ENCODE measurements at regions of chr1 and their contacts with region 1.

Region 1: DNA sequence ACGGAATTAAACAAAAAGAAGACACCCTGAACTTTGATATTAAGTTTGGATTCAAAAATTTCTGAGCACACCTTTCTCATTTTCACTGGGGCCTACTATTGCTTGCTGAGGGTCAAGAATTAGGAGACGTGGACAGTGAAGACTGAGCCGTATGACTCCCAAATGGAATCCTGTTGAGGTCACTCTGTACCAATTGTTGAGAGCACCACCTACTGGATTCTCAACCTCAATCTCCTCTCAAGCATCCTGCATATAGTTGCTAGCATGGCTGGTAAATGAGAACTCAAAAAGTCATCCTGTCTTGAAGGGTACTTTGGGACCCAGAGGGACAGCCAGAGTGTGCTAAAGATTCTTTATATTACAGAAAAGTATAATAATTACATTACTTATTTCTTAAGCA is 20.2 kb upstream of the MTR start:
- DNase-seq: no peak
- ATAC-seq: no peak
- H3K4me3 ChIP-seq: no peak overlapping the region
- H3K27ac ChIP-seq: no peak overlapping the region
- H3K4me1 ChIP-seq: no peaks in the 10 kb centered on the region
- H3K27me3 ChIP-seq: no peaks in the 10 kb centered on the region

Region 2: DNA sequence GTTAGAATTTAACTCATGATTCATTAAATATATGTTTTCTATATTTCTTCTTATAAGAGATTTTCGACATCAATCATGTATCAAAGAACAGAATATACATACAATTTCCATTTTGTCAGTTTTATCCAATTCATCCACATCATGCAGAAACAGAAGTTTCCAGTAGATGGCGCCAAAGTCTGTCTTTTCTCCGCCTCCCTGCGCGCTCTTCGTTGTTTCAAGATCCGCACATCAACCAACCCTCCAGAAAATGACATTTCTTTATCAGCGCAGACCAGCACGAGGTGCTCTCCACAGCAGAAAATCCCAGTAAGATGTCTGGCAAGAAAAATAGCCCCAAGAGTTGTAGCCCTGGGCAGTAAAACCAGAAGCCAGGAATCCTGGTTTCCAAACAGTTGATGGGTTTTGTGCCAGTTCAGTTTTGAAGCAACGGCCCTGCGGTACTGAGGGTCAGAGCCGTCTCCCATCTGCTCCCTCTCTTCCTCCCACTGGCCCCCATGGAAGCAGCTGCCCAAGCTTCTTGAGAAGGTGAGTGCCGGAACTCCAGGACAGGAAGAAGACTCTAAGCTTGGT is 671.2 kb before region 1 on chr1:
- intact Hi-C with region 1: loop called in 1 of 2 experiments (anchors 10 kb)
- DNase-seq: peak; percentile 47 to 48
- ATAC-seq: peak; percentile 73
- H3K4me3 ChIP-seq: no peak overlapping the region
- H3K27ac ChIP-seq: no peak overlapping the region
- H3K4me1 ChIP-seq: no peaks in the 10 kb centered on the region
- H3K27me3 ChIP-seq: no peaks in the 10 kb centered on the region

Region 3: GRCh38 chr1:236612349-236612748 is 162.6 kb before region 1 on chr1:
- intact Hi-C with region 1: loop called (anchors 2 to 5 kb)
- DNase-seq: no peak
- ATAC-seq: no peak
- H3K4me3 ChIP-seq: no peak overlapping the region
- H3K27ac ChIP-seq: no peak overlapping the region
- H3K4me1 ChIP-seq: no peaks in the 10 kb centered on the region
- H3K27me3 ChIP-seq: no peaks in the 10 kb centered on the region

Region 4: DNA sequence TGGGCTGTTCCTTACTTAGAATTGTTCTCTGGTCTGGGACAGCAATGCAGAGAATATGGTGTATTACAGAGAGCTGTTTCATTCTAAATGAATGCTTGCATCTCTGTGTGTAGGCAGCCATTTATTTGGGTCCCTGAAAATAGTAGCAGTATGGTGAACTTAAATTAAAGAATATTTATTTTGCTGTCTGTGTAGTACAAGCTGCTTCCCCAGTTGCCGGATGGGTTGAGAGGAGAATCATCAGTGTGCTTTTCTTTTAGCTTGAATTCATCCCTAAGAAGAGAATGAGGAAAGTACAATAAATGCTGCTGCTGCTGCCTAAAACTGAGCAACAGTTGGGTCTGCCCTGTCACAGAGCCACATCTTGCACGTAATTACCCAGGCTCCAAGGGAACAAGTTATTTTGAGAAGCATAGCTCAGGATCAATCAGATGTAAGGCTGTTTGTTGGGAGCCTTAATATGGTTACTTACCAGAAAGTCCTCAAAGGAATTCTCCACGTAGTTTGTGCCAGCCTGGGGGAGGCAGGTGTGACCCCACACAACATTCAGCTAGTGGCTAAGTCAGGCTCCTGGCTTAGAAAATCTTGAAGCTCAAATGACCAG is 72.0 kb before region 1 on chr1:
- intact Hi-C with region 1: no loop called
- DNase-seq: no peak
- ATAC-seq: no peak
- H3K4me3 ChIP-seq: no peak overlapping the region
- H3K27ac ChIP-seq: no peak overlapping the region
- H3K4me1 ChIP-seq: peaks cover 0 to 10% of the 10 kb centered on the region in 2 donors
- H3K27me3 ChIP-seq: no peaks in the 10 kb centered on the region